ENCODE measurements at regions of chr10 and their contacts with region 1.

Region 1: DNA sequence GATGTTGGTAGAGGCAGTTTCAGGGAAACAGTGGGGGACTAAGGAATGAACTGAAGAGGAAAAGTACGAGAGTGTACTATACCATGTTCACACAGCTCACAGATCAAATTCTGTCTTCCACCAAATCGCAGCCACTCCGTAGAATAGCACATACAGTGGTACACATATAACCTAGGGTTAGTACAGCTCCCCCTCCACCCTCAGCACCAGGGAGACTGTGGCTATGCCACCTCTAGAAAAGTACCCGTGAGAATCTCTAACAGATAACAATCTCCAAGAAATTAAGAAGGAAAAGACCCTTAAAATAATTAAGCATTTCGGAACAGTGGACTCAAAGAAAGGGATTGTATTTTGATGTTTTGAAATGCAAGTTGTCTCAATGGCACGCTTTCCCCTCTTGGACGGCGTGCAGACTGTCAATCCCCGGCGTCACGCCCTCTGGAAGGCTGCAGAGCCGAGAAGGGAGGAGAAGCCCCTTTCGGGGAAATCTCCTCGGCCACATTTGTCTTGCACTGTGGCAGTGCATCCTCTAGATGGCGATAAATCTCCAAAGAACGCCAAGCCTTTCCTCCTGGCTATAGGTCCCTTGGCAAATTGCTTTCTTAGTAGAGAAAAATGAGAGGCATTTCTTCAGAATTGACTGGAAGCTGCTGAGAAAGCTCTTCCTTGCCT is 345.0 kb downstream of the REEP3 start:
- DNase-seq: peak; percentile 49 to 71
- ATAC-seq: peak; percentile 88 to 97; a peak in 5 of 6 replicates
- H3K4me3 ChIP-seq: no peak overlapping the region
- H3K27ac ChIP-seq: no peak overlapping the region
- H3K4me1 ChIP-seq: no peaks in the 10 kb centered on the region; the same call in 2 of the 3 replicates
- CTCF ChIP-seq: peak; percentile 75
- EP300 ChIP-seq: no peak
- POLR2A ChIP-seq: no peak
- RAD21 ChIP-seq: peak; percentile 57 to 62

Region 2: DNA sequence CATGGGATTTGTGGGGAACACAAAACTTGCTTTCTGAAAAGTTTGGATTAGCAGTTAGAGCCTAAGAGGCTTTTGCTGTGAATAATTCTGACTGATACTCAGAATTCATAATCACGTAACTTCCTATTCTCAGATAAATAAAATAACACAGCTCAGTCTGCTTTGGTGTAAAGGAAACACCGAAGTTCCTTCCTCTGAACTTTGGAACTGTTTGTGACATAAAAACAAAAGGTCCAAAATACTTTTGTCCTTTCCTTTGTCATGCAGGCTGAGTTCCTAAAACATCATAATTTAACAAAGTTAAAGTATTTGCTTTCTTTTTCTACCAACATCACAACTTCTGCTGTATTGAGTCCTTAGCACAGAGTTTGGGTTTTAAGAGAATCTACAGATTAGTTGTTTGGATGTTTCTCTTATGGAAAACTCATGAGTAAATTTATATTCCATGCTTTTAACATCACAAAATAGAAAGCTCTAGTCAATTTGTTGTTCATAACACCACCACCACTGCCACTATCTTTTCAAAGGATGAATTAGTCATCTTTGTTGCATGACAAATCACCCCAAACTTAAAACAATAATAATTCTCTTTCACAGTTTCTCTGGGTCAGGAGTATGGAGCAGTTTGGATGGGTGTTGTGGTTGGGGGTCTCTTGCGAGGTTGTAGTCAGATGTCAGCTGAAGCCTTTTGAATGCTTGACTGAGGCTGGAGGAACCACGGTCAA is 221.6 kb before region 1 on chr10:
- CTCF ChIA-PET with region 1: no interaction called
- POLR2A ChIA-PET with region 1: no interaction called
- DNase-seq: no peak
- ATAC-seq: no peak
- H3K4me3 ChIP-seq: no peak overlapping the region
- H3K27ac ChIP-seq: no peak overlapping the region
- H3K4me1 ChIP-seq: no peaks in the 10 kb centered on the region
- CTCF ChIP-seq: no peak
- EP300 ChIP-seq: no peak
- POLR2A ChIP-seq: no peak
- RAD21 ChIP-seq: no peak

Region 3: GRCh38 chr10:63972949-63973827 is 107.0 kb after region 1 on chr10:
- CTCF ChIA-PET with region 1: interaction called, 12 read pairs
- POLR2A ChIA-PET with region 1: no interaction called
- DNase-seq: no peak
- ATAC-seq: no peak
- H3K4me3 ChIP-seq: no peak overlapping the region
- H3K27ac ChIP-seq: no peak overlapping the region
- H3K4me1 ChIP-seq: no peaks in the 10 kb centered on the region
- CTCF ChIP-seq: no peak
- EP300 ChIP-seq: no peak
- POLR2A ChIP-seq: no peak
- RAD21 ChIP-seq: no peak

Region 4: DNA sequence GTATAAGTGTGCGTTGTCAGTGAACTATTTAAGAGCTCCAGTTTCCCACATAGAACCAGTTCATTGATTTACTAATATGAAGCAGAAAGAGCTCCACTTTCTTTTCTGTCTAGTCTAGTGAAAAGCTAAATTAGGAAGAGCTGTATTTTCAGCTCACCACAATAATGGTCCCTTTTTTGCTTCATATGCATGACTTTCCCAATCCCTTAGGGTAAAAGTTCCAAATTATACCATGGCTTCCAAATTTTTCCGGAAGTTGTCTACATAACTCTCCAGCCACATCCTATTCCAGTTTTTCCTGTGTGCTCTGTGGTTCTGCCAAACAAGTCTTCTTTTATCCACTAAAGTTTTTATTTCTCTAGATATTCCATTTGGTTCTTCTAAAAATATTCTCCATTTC is 340.2 kb after region 1 on chr10:
- CTCF ChIA-PET with region 1: no interaction called
- POLR2A ChIA-PET with region 1: no interaction called
- DNase-seq: no peak
- ATAC-seq: no peak
- H3K4me3 ChIP-seq: no peak overlapping the region
- H3K27ac ChIP-seq: no peak overlapping the region
- H3K4me1 ChIP-seq: no peaks in the 10 kb centered on the region
- CTCF ChIP-seq: no peak
- EP300 ChIP-seq: no peak
- POLR2A ChIP-seq: no peak
- RAD21 ChIP-seq: no peak